A549 (cell line): ENCODE measurements at regions of chr18 and their contacts with region 1.

Region 1: GRCh38 chr18:22983175-22983574 is 50.0 kb downstream of the RBBP8 start:
- DNase-seq: peak; percentile 6 to 41
- ATAC-seq: no peak
- H3K4me3 ChIP-seq: no peak overlapping the region
- H3K27ac ChIP-seq: no peak overlapping the region
- H3K4me1 ChIP-seq: peaks cover 13% of the 10 kb centered on the region
- CTCF ChIP-seq: peak; percentile 54
- EP300 ChIP-seq: no peak
- POLR2A ChIP-seq: no peak
- RAD21 ChIP-seq: peak; percentile 65 to 75

Region 2: GRCh38 chr18:22800551-22800951 is 182.6 kb before region 1 on chr18:
- CTCF ChIA-PET with region 1: interaction called, 11 read pairs
- POLR2A ChIA-PET with region 1: no interaction called
- DNase-seq: no peak
- ATAC-seq: no peak
- H3K4me3 ChIP-seq: no peak overlapping the region
- H3K27ac ChIP-seq: no peak overlapping the region
- H3K4me1 ChIP-seq: peaks cover 9% of the 10 kb centered on the region; the same call in 1 of the 3 replicates
- CTCF ChIP-seq: no peak
- EP300 ChIP-seq: no peak
- POLR2A ChIP-seq: no peak
- RAD21 ChIP-seq: no peak

Region 3: DNA sequence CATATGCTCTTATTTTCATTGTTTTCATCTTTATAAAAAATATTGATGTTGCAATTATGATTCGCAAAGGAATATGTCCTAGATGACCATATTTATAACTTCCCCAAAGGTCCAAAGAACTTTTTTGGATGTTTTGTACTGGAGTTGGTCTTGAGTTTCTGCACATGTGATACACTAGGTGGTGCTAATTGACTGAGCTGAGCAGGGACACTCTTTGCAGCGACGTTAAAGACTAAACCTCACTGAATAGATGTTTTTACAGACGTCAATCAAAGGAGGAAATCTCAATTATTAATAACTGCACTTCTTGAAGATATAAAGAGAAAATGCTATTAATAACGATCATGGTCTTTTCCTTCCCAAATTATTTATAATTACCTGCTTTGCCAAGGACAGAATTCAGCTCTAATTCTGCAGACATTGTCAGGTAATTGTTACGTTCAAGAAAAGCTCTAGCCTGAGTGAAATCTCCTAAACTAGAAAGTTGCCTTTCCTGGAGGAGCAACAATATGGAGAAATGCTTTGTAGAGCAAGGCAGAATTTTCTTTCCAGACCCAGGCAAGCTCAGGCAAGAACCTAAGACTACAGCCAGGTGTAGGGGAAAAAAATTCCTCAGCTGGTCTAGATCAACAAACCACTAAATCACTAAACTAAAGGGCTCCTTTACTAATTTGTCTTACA is 169.4 kb before region 1 on chr18:
- CTCF ChIA-PET with region 1: interaction called, 22 read pairs
- POLR2A ChIA-PET with region 1: no interaction called
- DNase-seq: peak; percentile 7 to 33
- ATAC-seq: peak; percentile 59 to 67; a peak in 4 of 6 replicates
- H3K4me3 ChIP-seq: no peak overlapping the region
- H3K27ac ChIP-seq: no peak overlapping the region
- H3K4me1 ChIP-seq: peaks cover 16% of the 10 kb centered on the region
- CTCF ChIP-seq: peak; percentile 63
- EP300 ChIP-seq: no peak
- POLR2A ChIP-seq: no peak
- RAD21 ChIP-seq: peak; percentile 72 to 77

Region 4: DNA sequence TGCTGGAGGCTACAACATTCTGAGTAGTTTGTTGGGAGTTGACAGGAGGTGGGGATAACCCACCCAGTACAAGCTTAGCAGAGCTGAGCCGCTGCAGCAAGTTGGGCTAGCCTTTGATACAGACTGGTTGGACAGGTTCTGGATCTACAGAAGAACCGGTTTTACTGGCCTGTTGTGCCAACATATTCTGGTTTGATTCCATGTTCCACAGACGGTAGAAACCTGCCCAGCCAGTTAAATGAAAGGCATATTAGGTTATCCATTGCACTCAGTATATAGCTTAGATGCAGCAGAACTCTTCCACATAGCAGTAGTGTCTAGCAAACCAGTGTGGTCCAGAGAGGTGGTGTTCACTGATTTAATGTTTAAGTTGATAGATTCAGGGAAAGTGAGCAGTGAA is 69.3 kb before region 1 on chr18:
- CTCF ChIA-PET with region 1: no interaction called
- POLR2A ChIA-PET with region 1: no interaction called
- DNase-seq: no peak
- ATAC-seq: no peak
- H3K4me3 ChIP-seq: no peak overlapping the region
- H3K27ac ChIP-seq: no peak overlapping the region
- H3K4me1 ChIP-seq: peaks cover 10% of the 10 kb centered on the region; the same call in 2 of the 3 replicates
- CTCF ChIP-seq: no peak
- EP300 ChIP-seq: no peak
- POLR2A ChIP-seq: no peak
- RAD21 ChIP-seq: no peak